PC-9 (cell line): ENCODE measurements at regions of chr6 and their contacts with region 1.

Region 1: GRCh38 chr6:116268589-116269293 is 11.0 kb downstream of the TSPYL1 start:
- DNase-seq: peak in 1 of 2 experiments; percentile 83
- H3K4me3 ChIP-seq: no peak overlapping the region
- H3K27ac ChIP-seq: no peak overlapping the region
- H3K4me1 ChIP-seq: peaks cover 6% of the 10 kb centered on the region; the same call in 1 of the 2 replicates
- H3K27me3 ChIP-seq: no peaks in the 10 kb centered on the region
- CTCF ChIP-seq: peak; percentile 98

Region 2: DNA sequence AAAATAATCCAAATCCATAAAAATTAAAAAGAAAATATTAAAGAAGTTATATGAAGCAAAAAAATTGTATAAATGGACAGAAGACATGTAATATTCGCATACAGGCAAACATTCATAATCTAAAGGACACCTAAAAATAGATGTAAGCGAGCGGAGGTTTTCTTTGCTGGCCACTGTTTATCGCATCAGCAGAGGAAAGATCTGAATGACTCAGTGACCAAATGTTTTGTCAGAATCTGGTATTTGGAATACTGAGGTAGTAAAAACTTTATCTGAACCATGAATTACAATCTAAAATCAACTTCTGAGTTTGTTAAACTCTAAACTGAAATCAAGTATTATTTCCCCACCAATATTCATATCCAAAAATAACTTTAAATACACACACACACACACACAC is 22.7 kb before region 1 on chr6:
- CTCF ChIA-PET with region 1: no interaction called
- POLR2A ChIA-PET with region 1: no interaction called
- intact Hi-C with region 1: no loop called
- DNase-seq: no peak
- H3K4me3 ChIP-seq: no peak overlapping the region
- H3K27ac ChIP-seq: no peak overlapping the region
- H3K4me1 ChIP-seq: peaks cover 20% of the 10 kb centered on the region
- H3K27me3 ChIP-seq: no peaks in the 10 kb centered on the region
- CTCF ChIP-seq: no peak

Region 3: DNA sequence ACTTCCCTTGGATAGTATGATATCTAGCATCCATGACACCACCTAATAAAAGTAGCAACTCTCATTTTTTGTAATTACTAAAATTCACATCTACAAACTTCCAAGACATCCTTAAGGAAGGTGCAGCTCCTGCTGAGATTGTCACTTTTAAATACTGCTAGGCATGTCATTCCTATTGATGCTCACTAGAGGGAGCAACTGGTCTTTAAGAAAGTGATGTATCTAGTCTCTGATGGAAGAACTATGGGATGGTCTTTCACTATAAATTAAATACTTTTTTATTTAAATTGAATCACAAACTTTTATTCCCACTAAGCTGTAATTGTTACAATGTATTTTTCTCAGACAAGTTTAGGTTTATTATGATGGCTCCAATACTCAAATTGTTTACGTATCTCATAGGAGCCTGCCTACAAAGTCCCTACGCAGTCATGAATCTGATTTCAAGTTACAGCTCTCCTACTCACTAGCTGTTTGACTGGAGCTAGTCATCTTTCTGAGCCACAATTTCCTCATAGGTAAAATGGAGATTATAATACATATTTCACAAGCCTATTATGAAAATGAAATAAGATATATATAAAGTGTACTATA is 19.0 kb after region 1 on chr6:
- CTCF ChIA-PET with region 1: interaction called, 16 read pairs
- POLR2A ChIA-PET with region 1: no interaction called
- intact Hi-C with region 1: no loop called
- DNase-seq: peak in 1 of 2 experiments; percentile 61
- H3K4me3 ChIP-seq: no peak overlapping the region
- H3K27ac ChIP-seq: no peak overlapping the region
- H3K4me1 ChIP-seq: no peaks in the 10 kb centered on the region
- H3K27me3 ChIP-seq: no peaks in the 10 kb centered on the region
- CTCF ChIP-seq: peak; percentile 99

Region 4: GRCh38 chr6:116847227-116847626 is 578.5 kb after region 1 on chr6:
- CTCF ChIA-PET with region 1: no interaction called
- POLR2A ChIA-PET with region 1: no interaction called
- intact Hi-C with region 1: loop called (anchors 1 kb)
- DNase-seq: no peak
- H3K4me3 ChIP-seq: no peak overlapping the region
- H3K27ac ChIP-seq: no peak overlapping the region
- H3K4me1 ChIP-seq: no peaks in the 10 kb centered on the region
- H3K27me3 ChIP-seq: no peaks in the 10 kb centered on the region
- CTCF ChIP-seq: peak; percentile 60